A673 (cell line): ENCODE measurements at regions of chr13 and their contacts with region 1.

Region 1: GRCh38 chr13:77860507-77860981 is 58.1 kb downstream of the EDNRB start:
- DNase-seq: peak; percentile 87
- H3K4me3 ChIP-seq: no peak overlapping the region
- H3K27ac ChIP-seq: peak overlapping the region; percentile 6
- H3K4me1 ChIP-seq: peaks cover 54% of the 10 kb centered on the region
- H3K27me3 ChIP-seq: no peaks in the 10 kb centered on the region
- CTCF ChIP-seq: no peak

Region 2: DNA sequence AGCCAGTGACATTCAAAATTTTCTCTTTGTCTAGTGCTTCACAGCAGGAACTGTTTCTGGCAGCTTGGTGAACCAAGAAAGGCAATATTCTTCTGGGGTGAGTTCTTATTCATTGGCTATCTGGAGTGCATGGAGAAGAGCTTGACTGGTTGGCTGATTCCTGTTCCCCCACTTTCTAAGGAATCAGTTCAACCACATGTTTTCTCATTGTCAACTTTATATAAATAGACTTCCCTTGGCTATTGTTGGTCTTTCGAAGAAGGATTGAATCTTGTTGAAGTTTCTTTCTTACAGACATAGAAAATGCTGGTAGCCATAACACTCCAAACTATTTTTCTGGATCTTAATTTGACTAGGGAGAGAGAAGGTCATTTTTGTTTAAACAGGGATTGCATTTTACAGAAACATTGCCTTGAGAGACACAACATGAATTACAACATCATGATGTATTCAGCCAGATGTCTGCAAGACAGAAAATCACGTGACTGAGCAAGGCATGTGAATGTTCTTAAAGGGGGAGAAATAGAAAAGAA is 27.1 kb before region 1 on chr13:
- CTCF ChIA-PET with region 1: no interaction called
- POLR2A ChIA-PET with region 1: no interaction called
- intact Hi-C with region 1: loop called (anchors 1 kb)
- DNase-seq: peak; percentile 84
- H3K4me3 ChIP-seq: no peak overlapping the region
- H3K27ac ChIP-seq: peak overlapping the region; percentile 67
- H3K4me1 ChIP-seq: peaks cover 37% of the 10 kb centered on the region
- H3K27me3 ChIP-seq: no peaks in the 10 kb centered on the region
- CTCF ChIP-seq: no peak

Region 3: DNA sequence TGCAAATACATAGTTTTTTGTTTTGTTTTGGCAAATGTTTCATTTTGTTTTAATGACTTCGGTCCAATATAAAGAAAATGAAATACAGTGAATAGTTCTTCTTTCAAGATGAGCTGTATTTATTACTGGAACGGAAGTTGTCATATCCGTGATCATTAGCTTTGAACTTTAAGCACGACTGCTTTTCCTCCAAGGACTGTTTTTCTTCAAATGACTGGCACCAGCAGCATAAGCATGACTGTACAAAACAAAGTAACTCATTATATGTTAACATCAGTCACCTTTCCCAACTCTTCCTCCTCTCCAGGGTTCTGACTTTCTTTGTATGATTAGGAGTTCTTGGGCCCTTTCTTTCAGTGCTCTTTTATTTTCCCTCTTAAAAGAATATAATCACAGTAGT is 37.6 kb after region 1 on chr13:
- CTCF ChIA-PET with region 1: interaction called, 3 read pairs
- POLR2A ChIA-PET with region 1: no interaction called
- intact Hi-C with region 1: loop called (anchors 5 kb)
- DNase-seq: peak; percentile 86
- H3K4me3 ChIP-seq: peak overlapping the region; percentile 17
- H3K27ac ChIP-seq: peak overlapping the region; percentile 27
- H3K4me1 ChIP-seq: peaks cover 29% of the 10 kb centered on the region
- H3K27me3 ChIP-seq: no peaks in the 10 kb centered on the region
- CTCF ChIP-seq: no peak